Right ventricle myocardium inferior (tissue), 1 donor: ENCODE measurements at regions of chr9 and their contacts with region 1.

Region 1: GRCh38 chr9:14353222-14354056 is 39.5 kb upstream of the NFIB start:
- DNase-seq: peak; percentile 94
- ATAC-seq: peak; percentile 77

Region 2: DNA sequence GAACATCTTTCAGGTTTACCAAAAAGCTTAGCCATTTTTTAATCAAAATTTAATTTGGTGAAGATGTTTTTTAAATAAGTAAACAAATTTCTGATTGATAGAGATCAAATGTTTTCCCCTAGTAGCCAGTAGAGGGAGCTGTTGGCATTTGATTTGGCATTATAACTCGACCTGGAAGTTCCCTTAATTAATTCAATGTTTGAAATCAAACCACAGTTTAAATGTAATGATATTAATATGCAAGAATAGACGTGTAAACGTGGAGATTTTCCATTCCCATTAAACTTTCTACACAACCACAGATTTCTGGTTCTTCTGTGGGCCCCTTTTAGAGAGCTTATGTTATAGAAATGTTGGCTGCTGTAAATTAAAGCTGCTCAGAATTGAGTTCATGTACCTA is 925.9 kb before region 1 on chr9:
- intact Hi-C with region 1: loop called (anchors 5 kb)
- DNase-seq: no peak
- ATAC-seq: no peak

Region 3: DNA sequence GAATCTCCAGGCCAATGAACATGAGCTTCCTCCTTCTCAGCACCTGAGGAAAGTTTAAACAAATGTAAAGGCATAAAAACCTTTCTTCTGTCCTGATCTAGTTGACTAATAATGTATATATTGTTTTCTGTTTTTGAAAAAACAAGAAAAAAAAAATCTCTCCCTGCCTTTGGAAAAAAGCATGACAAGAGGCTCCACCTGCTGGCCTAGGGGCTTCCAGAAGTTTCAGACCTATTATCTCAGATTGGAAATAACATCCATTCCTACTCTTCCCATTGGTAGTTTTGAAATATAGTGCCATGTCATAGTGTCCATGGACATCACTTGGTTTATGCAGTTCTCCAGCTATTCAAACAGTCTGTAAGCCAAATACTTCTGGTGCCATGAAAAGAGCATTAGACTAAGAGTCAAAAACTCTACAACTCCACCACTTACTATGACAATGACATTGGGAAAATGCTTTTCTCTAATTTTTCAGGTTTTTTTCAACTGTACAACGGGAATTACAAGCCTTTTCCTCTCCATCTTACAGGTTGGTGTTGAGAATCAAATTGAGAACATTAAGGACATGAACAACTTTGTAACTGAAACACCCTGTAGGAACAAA is 664.3 kb before region 1 on chr9:
- intact Hi-C with region 1: loop called (anchors 5 kb)
- DNase-seq: no peak
- ATAC-seq: no peak

Region 4: GRCh38 chr9:14251154-14252071 is 102.0 kb before region 1 on chr9:
- intact Hi-C with region 1: loop called (anchors 5 kb)
- DNase-seq: peak; percentile 79
- ATAC-seq: peak; percentile 93

Region 5: GRCh38 chr9:14400658-14400995 is 47.2 kb after region 1 on chr9:
- intact Hi-C with region 1: loop called (anchors 5 kb)
- DNase-seq: no peak
- ATAC-seq: peak; percentile 88